Heart left ventricle (tissue), 16 donors: ENCODE measurements at regions of chr5 and their contacts with region 1.

Region 1: GRCh38 chr5:173714551-173715428 is 98.3 kb upstream of the BOD1 start:
- DNase-seq: no peak
- ATAC-seq: peak in 2 of 4 donors; percentile 20 to 80
- H3K4me3 ChIP-seq: no peak overlapping the region
- H3K27ac ChIP-seq: no peak overlapping the region
- H3K4me1 ChIP-seq: peaks cover 0 to 15% (median 0%) of the 10 kb centered on the region in 12 donors
- H3K27me3 ChIP-seq: no peaks in the 10 kb centered on the region
- CTCF ChIP-seq: no peak
- POLR2A ChIP-seq: no peak

Region 2: GRCh38 chr5:173451031-173451430 is 263.8 kb before region 1 on chr5:
- intact Hi-C with region 1: no loop called
- DNase-seq: no peak
- ATAC-seq: no peak
- H3K4me3 ChIP-seq: no peak overlapping the region
- H3K27ac ChIP-seq: peak overlapping the region in 8 of 12 donors; percentile 34 to 79 (median 68)
- H3K4me1 ChIP-seq: peaks cover 0 to 36% (median 15%) of the 10 kb centered on the region in 12 donors
- H3K27me3 ChIP-seq: no peaks in the 10 kb centered on the region
- CTCF ChIP-seq: peak in 7 of 12 donors; percentile 13 to 45 (median 32)
- POLR2A ChIP-seq: no peak

Region 3: DNA sequence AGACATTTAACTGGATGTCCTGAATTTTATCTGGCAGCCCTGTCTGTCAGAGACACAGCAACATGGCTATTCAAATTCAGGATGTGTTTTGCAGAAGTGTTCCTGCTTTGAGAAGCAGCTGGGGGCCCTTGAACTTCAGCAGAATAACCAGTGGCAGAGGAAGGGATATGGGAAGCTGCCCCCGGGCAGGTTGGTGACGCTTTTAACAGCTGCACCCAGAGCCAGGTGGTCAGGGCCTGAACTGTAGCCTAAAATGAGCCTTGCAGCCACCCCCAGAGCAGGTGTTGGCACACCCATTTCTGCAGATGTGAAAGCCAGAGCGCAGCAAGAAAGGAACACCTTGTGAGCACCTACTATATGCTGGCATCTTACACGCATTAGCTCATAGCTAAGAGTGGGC is 30.3 kb after region 1 on chr5:
- intact Hi-C with region 1: loop called in 1 of 10 experiments (anchors 5 kb)
- DNase-seq: no peak
- ATAC-seq: peak in 1 of 4 donors; percentile 27
- H3K4me3 ChIP-seq: no peak overlapping the region
- H3K27ac ChIP-seq: no peak overlapping the region
- H3K4me1 ChIP-seq: peaks cover 0 to 28% (median 0%) of the 10 kb centered on the region in 12 donors
- H3K27me3 ChIP-seq: no peaks in the 10 kb centered on the region
- CTCF ChIP-seq: no peak
- POLR2A ChIP-seq: no peak